HepG2 (cell line): ENCODE measurements at regions of chr18 and their contacts with region 1.

Region 1: GRCh38 chr18:13823707-13824395 is at the start of gene MC5R:
- DNase-seq: peak; percentile 23
- ATAC-seq: peak; percentile 97
- H3K4me3 ChIP-seq: peak within 1 kb of the TSS in 2 of 3 experiments; percentile 38 to 45; a peak in 4 of 6 replicates
- H3K27ac ChIP-seq: no peak within 1 kb of the TSS
- H3K4me1 ChIP-seq: peaks cover 14% of the 10 kb centered on the region
- H3K27me3 ChIP-seq: peaks cover 8 to 43% of the 10 kb centered on the region in 2 experiments; a peak in 3 of 5 replicates
- CTCF ChIP-seq: peak; percentile 93
- EP300 ChIP-seq: no peak
- POLR2A ChIP-seq: no peak
- RAD21 ChIP-seq: peak; percentile 95
- total RNA-seq, gene MC5R: not detected in 2 replicates

Region 2: GRCh38 chr18:13982136-13982535 is 158.3 kb after region 1 on chr18:
- CTCF ChIA-PET with region 1: interaction called, 4 read pairs
- POLR2A ChIA-PET with region 1: no interaction called
- in situ Hi-C with region 1: no loop called
- intact Hi-C with region 1: loop called (anchors 5 kb)
- DNase-seq: peak; percentile 20
- ATAC-seq: peak; percentile 84
- H3K4me3 ChIP-seq: no peak overlapping the region
- H3K27ac ChIP-seq: no peak overlapping the region
- H3K4me1 ChIP-seq: no peaks in the 10 kb centered on the region
- H3K27me3 ChIP-seq: no peaks in the 10 kb centered on the region
- CTCF ChIP-seq: peak; percentile 51
- EP300 ChIP-seq: no peak
- POLR2A ChIP-seq: no peak
- RAD21 ChIP-seq: no peak

Region 3: GRCh38 chr18:14104906-14105748 is 281.3 kb after region 1 on chr18:
- CTCF ChIA-PET with region 1: no interaction called
- POLR2A ChIA-PET with region 1: no interaction called
- in situ Hi-C with region 1: no loop called
- intact Hi-C with region 1: no loop called
- DNase-seq: peak; percentile 6
- ATAC-seq: no peak
- H3K4me3 ChIP-seq: no peak overlapping the region
- H3K27ac ChIP-seq: no peak overlapping the region
- H3K4me1 ChIP-seq: no peaks in the 10 kb centered on the region
- H3K27me3 ChIP-seq: no peaks in the 10 kb centered on the region; a peak in 1 of 5 replicates
- CTCF ChIP-seq: no peak
- EP300 ChIP-seq: no peak
- POLR2A ChIP-seq: no peak
- RAD21 ChIP-seq: no peak